ENCODE measurements at regions of chr15 and their contacts with region 1.

Region 1: GRCh38 chr15:99409097-99409473 is 156.7 kb upstream of the MEF2A start:
- DNase-seq: peak; percentile 71
- H3K4me3 Mint-ChIP-seq: no peak overlapping the region
- H3K27ac Mint-ChIP-seq: no peak overlapping the region
- H3K4me1 Mint-ChIP-seq: no peaks in the 10 kb centered on the region
- H3K27me3 Mint-ChIP-seq: no peaks in the 10 kb centered on the region
- CTCF ChIP-seq: peak; percentile 59

Region 2: DNA sequence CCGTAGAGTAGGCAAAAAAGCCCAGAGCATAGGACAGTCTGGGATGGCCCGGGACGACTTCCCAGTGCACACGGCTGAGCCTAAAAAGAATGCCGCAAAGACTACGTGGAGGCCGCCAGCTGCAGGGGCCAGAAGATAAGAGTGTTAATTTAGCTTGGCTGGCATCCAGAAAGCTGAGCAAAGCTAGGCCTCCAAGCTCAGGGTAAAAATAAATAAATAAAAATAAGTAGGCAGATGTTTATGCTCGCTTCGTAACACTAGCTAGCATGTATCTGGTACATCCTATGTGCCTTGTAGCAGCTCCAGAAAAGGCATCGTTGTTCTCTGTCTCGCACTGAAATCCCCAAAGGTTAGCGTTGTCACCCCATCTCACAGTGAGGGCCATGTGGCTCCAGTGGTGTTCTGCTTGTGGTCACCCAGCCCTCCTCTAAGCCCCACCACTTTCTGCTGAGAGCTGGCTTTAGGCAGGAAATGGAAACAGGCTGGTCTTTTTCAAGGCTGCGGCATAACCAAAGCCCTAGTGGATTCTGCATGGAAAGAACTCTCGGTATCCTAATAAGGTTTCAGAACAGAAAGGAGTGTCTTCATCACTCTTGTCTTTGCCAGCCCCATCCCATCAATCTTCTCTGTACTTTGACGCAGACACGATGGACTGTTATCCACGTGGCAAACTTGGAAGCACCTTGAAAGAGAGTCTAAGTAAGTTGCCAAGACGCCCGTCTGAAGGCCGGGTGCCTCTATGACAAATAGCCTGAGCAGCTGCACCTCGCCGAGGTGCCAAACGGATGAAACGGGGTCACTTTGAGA is 98.6 kb after region 1 on chr15:
- CTCF ChIA-PET with region 1: interaction called, 5 read pairs
- intact Hi-C with region 1: loop called (anchors 10 kb)
- DNase-seq: no peak
- H3K4me3 Mint-ChIP-seq: no peak overlapping the region
- H3K27ac Mint-ChIP-seq: no peak overlapping the region
- H3K4me1 Mint-ChIP-seq: peaks cover 7% of the 10 kb centered on the region
- H3K27me3 Mint-ChIP-seq: no peaks in the 10 kb centered on the region
- CTCF ChIP-seq: no peak

Region 3: DNA sequence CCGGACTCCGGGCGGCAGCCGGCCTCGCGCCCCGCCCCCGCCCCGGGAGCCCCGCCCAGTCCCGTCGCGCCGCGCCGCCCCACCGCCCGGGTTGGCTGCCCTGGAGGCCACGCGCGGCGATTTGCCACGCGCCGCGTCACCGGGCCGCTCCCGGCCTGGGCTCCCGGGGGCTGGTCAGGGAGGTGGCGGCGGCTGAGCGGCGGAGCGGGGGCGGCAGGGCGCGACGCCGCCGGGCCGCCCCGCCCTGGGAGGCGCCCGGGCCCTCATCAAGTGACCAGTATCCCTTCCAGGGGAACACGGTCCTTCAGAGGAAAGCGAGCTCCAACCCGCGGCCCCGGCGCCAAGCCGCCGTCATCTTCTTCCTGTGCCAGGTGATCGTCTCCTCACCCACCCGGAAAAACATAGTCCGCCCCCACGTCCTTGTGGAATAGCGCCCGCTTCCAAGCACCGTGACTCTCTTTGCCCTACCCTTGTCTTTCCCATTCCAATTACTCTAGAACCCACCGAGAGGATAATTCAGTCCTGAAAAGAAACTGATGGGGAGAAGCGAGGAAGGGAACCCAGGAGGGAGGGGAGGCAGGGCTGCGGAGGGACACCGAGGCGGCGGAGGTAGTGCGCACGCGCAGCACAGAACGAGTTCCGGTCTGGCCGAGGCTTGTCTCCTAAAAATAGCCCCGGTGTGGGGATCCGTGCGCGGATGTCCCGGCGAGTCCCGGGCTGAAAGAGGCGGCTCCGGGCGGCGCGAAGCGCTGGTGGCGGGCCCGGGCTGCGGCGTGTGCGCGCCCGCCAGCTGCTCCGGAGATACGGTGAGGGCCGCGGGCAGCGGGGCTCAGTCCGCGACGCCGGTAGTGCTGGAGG is 156.4 kb after region 1 on chr15 and contains the start of gene MEF2A:
- CTCF ChIA-PET with region 1: no interaction called
- intact Hi-C with region 1: loop called (anchors 5 kb)
- DNase-seq: peak; percentile 97
- H3K4me3 Mint-ChIP-seq: peak within 1 kb of the TSS; percentile 93
- H3K27ac Mint-ChIP-seq: peak within 1 kb of the TSS; percentile 97
- H3K4me1 Mint-ChIP-seq: peaks cover 16% of the 10 kb centered on the region
- H3K27me3 Mint-ChIP-seq: peaks cover 39% of the 10 kb centered on the region
- CTCF ChIP-seq: no peak
- total RNA-seq, gene MEF2A: 33.6 and 35.0 TPM in 2 replicates

Region 4: DNA sequence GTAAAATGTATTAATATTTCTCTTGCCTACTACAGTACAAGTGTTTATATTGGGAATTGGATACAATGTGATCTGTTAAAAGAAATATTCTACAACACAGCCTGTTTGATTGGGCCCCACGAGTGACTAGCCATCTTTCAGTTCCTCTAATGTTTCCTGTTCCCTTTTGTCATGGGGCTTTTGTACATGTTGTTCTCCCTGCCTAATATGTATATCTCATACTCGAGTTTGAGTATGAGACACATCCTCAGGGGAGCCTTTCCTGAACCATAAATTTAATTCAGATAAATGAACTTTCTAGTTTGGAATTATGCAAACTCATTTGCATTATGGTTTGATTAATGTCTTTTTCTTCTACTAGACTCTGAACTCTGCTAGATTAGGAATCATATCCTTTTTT is 222.2 kb after region 1 on chr15:
- CTCF ChIA-PET with region 1: no interaction called
- intact Hi-C with region 1: no loop called
- DNase-seq: no peak
- H3K4me3 Mint-ChIP-seq: no peak overlapping the region
- H3K27ac Mint-ChIP-seq: no peak overlapping the region
- H3K4me1 Mint-ChIP-seq: peaks cover 45% of the 10 kb centered on the region
- H3K27me3 Mint-ChIP-seq: no peaks in the 10 kb centered on the region
- CTCF ChIP-seq: no peak

Region 5: GRCh38 chr15:100053474-100054121 is 644.5 kb after region 1 on chr15:
- CTCF ChIA-PET with region 1: no interaction called
- intact Hi-C with region 1: no loop called
- DNase-seq: no peak
- H3K4me3 Mint-ChIP-seq: no peak overlapping the region
- H3K27ac Mint-ChIP-seq: no peak overlapping the region
- H3K4me1 Mint-ChIP-seq: no peaks in the 10 kb centered on the region
- H3K27me3 Mint-ChIP-seq: peaks cover 15% of the 10 kb centered on the region
- CTCF ChIP-seq: no peak